A673 (cell line): ENCODE measurements at regions of chr14 and their contacts with region 1.

Region 1: DNA sequence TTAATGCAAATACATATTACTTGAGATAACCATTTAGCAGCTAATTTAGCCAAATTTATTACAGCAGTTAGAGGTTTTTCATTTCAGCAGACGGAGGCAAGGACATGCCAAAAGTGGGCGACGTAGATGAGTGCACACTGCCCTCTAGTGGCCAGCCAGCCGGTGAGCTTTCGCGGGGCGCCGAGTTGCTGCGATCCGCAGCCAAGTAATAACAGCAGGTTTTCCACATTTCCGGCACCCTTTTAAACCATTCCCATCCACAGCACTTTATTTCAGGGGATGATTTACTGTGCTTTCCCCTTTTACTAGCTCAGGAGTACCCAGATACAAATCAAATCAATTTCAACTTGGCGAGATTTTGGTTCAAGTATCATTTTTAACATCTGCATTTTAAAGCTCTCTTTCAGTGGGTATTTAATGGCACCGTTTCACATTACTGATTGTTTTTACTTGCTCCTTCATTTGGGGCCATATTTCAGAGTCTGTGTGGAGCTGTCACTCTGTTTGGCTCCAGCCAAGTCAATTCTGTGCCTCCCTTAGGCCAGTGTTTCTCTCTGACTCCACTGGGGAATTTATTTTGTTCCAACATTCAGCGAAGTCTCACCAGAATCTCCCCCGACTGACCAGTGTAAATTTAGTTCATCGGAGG is 158.0 kb downstream of the EGLN3 start:
- DNase-seq: peak; percentile 87
- H3K4me3 ChIP-seq: no peak overlapping the region
- H3K27ac ChIP-seq: no peak overlapping the region
- H3K4me1 ChIP-seq: peaks cover 18% of the 10 kb centered on the region
- H3K27me3 ChIP-seq: no peaks in the 10 kb centered on the region
- CTCF ChIP-seq: peak; percentile 98

Region 2: GRCh38 chr14:32576088-32576795 is 1216.6 kb before region 1 on chr14:
- CTCF ChIA-PET with region 1: no interaction called
- POLR2A ChIA-PET with region 1: no interaction called
- intact Hi-C with region 1: loop called (anchors 2 kb)
- DNase-seq: peak; percentile 75
- H3K4me3 ChIP-seq: no peak overlapping the region
- H3K27ac ChIP-seq: no peak overlapping the region
- H3K4me1 ChIP-seq: peaks cover 21% of the 10 kb centered on the region
- H3K27me3 ChIP-seq: no peaks in the 10 kb centered on the region
- CTCF ChIP-seq: peak; percentile 96

Region 3: GRCh38 chr14:33184587-33184986 is 608.3 kb before region 1 on chr14:
- CTCF ChIA-PET with region 1: no interaction called
- POLR2A ChIA-PET with region 1: no interaction called
- intact Hi-C with region 1: loop called (anchors 2 kb)
- DNase-seq: peak; percentile 32
- H3K4me3 ChIP-seq: no peak overlapping the region
- H3K27ac ChIP-seq: no peak overlapping the region
- H3K4me1 ChIP-seq: peaks cover 7% of the 10 kb centered on the region
- H3K27me3 ChIP-seq: no peaks in the 10 kb centered on the region
- CTCF ChIP-seq: peak; percentile 41

Region 4: GRCh38 chr14:33432407-33433023 is 360.3 kb before region 1 on chr14:
- CTCF ChIA-PET with region 1: no interaction called
- POLR2A ChIA-PET with region 1: no interaction called
- intact Hi-C with region 1: loop called (anchors 2 kb)
- DNase-seq: peak; percentile 69
- H3K4me3 ChIP-seq: no peak overlapping the region
- H3K27ac ChIP-seq: no peak overlapping the region
- H3K4me1 ChIP-seq: peaks cover 9% of the 10 kb centered on the region
- H3K27me3 ChIP-seq: no peaks in the 10 kb centered on the region
- CTCF ChIP-seq: peak; percentile 81

Region 5: GRCh38 chr14:33676135-33676566 is 116.7 kb before region 1 on chr14:
- CTCF ChIA-PET with region 1: interaction called, 5 read pairs
- POLR2A ChIA-PET with region 1: no interaction called
- intact Hi-C with region 1: loop called (anchors 1 kb)
- DNase-seq: peak; percentile 74
- H3K4me3 ChIP-seq: no peak overlapping the region
- H3K27ac ChIP-seq: no peak overlapping the region
- H3K4me1 ChIP-seq: peaks cover 27% of the 10 kb centered on the region
- H3K27me3 ChIP-seq: no peaks in the 10 kb centered on the region
- CTCF ChIP-seq: peak; percentile 71